HEK293 (cell line): ENCODE measurements at regions of chr18 and their contacts with region 1.

Region 1: DNA sequence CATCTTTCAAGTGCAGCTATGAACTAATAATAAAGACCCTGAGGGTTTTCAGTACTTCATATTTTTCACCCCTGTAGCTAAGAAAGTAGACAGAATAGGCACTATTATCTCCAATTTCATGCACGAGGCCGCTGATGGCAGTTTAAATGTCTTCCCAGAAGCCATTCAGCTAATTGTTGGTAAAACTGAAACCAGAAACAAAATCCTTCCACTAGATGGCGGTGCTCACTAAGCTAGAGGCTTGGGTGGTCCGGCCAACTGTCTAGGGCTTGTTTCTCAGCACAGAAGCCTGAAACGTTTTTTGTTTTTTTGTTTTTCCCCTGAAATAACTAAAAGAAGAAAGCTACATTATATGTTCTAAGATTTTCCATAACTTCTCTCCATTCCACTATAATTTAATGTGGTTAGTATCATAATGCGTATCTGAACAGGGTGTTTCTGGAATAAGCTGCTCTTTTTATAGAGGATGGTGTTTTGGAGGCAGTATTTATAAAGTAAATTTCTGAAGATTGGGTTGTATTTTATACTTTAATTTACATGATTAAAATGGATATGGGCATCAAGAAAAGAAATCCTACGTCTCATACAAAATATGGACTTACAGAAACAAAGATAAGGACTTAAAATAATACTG is 159.4 kb downstream of the PIK3C3 start:
- H3K4me3 ChIP-seq: no peak overlapping the region
- H3K27ac ChIP-seq: no peak overlapping the region
- H3K4me1 ChIP-seq: no peaks in the 10 kb centered on the region
- CTCF ChIP-seq: peak; percentile 74

Region 2: GRCh38 chr18:42053188-42053781 is 61.1 kb before region 1 on chr18:
- CTCF ChIA-PET with region 1: interaction called, 25 read pairs
- POLR2A ChIA-PET with region 1: no interaction called
- H3K4me3 ChIP-seq: no peak overlapping the region
- H3K27ac ChIP-seq: no peak overlapping the region
- H3K4me1 ChIP-seq: no peaks in the 10 kb centered on the region
- CTCF ChIP-seq: peak; percentile 28; the same call in 1 of the 2 replicates

Region 3: DNA sequence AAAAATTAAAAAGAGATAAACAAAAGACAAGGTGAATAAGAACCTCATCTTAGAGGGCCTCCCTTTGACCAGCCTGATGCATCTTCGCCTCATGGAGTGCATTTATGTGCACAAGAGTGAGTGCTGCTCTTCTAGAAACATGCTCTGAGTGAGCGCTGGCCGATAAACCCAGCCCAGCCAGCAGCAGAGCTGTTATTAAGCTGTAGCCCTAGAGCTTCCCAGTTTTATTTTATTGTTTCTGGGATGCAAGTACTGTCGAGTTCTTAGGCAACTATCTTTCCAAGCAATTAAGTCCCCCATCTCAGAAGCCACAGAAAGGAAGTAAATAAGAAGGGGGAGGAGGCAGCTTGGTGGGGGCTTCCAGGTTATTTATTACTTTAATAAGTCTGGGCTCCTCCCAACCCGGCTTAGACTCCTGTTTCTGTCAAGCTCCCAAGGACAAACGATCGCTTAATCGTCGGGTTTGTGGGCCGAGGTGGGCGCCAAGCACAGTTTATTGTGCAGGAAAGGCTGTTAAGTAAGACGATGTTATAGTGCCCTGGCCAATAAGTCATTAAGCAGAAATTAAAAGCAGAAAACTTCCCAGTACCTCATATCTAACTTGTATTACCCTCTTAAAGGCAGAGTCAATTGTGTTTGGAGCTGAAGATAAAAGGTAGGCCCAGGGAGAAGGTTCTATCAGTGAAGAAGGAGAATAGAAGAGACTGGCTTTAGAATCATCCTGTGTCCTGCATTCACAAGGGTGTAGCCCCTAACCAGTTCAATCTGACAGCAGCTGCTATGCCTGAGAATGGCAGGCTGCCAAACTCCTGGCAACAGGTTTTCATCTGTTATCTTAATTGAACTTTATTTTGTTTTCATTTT is 16.9 kb after region 1 on chr18:
- CTCF ChIA-PET with region 1: interaction called, 10 read pairs
- POLR2A ChIA-PET with region 1: no interaction called
- H3K4me3 ChIP-seq: no peak overlapping the region
- H3K27ac ChIP-seq: no peak overlapping the region
- H3K4me1 ChIP-seq: peaks cover 3% of the 10 kb centered on the region; the same call in 1 of the 2 replicates
- CTCF ChIP-seq: no peak

Region 4: DNA sequence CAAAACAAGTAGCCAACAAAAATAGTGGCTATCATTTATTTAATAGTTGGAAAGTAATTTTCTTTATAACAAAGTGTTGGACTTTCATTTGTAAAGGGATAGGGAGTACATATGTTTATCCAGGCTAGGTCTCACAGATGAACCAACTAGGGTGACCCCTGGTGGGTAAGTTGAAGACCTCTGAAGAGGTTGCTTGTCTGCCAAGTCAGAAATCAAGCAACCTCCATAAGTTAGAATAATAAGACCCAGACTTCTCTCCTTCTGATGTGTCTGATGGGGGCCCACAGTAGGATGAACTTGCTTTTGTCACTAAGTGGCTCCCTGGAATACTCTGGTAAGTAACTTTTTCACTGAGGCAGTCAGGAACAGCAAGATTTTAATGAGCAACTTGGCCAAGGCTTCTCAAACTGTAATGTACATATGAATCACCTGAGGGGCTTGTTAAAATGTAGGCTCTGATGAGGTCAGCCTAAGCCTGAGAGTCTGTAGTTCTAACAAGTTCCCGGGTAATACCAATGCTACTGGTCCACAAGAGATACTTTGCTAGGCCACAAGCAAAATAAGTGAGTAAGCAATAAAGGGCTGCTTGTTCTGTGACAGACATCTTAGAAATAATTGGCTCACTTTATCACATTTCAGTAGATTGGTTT is 160.2 kb after region 1 on chr18:
- CTCF ChIA-PET with region 1: interaction called, 37 read pairs
- POLR2A ChIA-PET with region 1: no interaction called
- H3K4me3 ChIP-seq: no peak overlapping the region
- H3K27ac ChIP-seq: peak overlapping the region; percentile 28; the same call in 1 of the 2 replicates
- H3K4me1 ChIP-seq: peaks cover 8% of the 10 kb centered on the region; the same call in 1 of the 2 replicates
- CTCF ChIP-seq: no peak

Region 5: DNA sequence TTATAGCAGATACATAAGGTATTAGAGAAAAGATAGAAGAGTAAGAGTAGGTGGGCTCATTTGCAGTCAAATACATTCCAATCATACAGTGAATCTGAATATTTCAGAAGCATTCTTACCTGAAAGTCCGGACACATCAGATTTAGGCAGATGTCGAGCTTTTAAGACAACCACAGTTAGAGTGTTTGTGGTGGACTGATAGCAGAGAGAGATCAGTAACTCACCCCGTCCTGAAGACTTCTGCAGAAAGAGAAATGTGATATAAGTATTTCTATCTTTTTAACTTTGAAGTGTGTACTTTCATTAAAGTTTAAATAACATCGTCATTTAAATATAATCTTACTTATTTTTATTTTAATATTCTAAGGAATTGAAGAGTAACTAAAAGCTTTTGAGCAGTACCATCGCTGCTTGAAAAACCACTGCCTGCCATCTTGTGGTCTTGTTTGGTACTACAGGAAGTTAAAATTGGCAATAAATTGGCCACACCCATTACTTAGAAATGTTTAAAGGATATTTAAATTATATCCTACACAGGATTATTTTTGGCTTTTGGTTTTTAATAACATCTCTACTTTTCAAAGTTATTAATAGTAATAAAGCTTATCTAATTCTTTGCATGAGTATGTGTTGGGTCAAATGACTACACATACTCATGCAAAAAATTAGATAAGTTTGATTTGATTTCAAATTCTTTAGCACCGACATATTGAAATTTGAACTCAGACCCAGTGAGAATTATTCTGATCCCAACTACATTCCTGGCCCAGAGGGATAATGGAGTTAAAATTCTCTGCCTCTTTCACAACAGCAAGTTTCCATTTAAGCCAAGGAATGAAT is 1157.4 kb after region 1 on chr18:
- CTCF ChIA-PET with region 1: interaction called, 26 read pairs
- POLR2A ChIA-PET with region 1: no interaction called
- H3K4me3 ChIP-seq: no peak overlapping the region
- H3K27ac ChIP-seq: no peak overlapping the region
- H3K4me1 ChIP-seq: no peaks in the 10 kb centered on the region
- CTCF ChIP-seq: 0 out of 2 replicates have a peak, but pooled peaks have one; percentile 12

Region 6: GRCh38 chr18:43563780-43564179 is 1449.4 kb after region 1 on chr18:
- CTCF ChIA-PET with region 1: interaction called, 32 read pairs
- POLR2A ChIA-PET with region 1: no interaction called
- H3K4me3 ChIP-seq: no peak overlapping the region
- H3K27ac ChIP-seq: no peak overlapping the region
- H3K4me1 ChIP-seq: no peaks in the 10 kb centered on the region
- CTCF ChIP-seq: peak; percentile 25; the same call in 1 of the 2 replicates